ENCODE measurements at regions of chr1 and their contacts with region 1.

Region 1: DNA sequence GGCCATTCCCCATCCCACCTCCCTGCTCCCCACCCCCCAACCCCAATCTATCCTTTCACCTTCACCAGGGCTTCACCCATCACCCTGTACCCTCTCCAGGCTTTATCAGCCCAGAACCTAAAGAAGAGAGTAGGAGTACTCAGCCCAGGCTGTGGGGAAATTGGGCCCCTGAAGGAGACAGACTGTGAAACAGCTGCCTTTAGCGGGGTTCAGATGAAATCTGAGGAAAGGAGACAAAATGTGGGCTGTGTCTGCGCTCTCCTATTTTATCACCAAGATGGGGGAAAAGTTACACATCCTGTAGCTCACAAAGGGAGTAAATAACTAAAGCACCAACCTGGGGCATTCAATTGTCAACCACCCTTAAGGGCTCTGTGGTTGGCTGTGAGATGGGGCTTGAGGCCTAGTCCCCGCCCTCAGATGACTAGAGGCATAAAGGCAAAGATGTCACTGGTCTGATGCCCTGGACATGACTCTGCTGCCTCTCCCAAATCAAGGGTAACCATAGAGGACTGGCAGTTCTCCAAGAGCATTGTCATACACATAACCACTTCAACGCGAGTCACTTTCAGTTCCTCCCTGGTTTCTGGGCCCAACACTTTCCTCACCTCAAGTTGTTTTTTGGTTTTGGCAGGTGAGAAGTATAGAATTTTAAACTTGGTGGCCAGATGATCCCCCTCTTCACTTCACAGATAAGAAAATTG is 30.0 kb downstream of the SLC27A3 start:
- DNase-seq: peak; percentile 90
- H3K4me3 ChIP-seq: peak overlapping the region; percentile 11
- H3K27ac ChIP-seq: peak overlapping the region; percentile 86
- H3K4me1 ChIP-seq: peaks cover 37% of the 10 kb centered on the region
- CTCF ChIP-seq: no peak

Region 2: DNA sequence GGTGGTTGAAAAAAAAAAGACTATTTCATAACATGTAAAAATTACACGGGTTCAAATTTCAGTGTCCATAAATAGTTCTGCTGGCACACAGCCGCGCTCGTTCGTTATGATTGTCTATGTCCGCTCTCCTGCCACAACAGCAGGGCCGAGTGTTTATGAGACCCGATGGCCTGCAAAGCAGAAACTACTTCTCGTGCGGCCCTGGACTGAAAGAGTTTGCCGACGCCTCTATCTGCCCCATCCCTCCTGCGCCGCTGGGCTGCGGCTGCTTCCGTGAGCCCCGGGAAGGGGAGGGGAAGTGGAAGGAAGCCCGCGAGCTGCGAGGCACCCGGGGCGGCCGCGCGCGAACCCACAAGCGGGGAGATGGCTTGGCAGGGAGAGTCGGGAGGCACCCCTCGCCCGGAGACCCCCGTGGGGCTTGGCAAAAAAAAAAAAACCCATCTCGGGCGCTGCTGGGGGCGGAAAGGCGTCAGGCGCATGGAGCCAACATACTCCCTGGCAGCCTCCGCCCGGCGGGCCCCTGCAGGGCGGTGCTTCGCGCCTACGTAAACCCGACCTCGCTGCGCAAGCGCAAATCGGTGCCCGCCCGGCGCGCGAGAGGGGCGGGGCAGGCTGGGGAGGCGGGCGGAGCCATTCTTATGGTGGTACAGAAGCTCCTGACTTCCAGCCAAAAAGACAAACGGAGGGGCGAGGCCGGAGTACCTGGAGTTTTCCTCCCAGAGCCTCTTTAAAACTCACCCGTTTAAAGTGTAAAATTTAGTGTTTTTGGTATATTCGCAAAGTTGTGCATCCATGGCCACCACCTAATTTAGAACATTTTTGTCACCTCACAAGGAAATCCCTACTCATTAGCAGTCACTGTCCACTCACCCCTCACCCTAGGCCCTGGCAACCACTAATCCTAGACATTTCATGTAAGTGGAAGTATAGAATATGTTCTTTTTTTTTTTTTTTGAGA is 21.7 kb before region 1 on chr1:
- CTCF ChIA-PET with region 1: interaction called, 13 read pairs
- POLR2A ChIA-PET with region 1: no interaction called
- intact Hi-C with region 1: no loop called
- DNase-seq: peak; percentile 95
- H3K4me3 ChIP-seq: peak overlapping the region; percentile 70
- H3K27ac ChIP-seq: peak overlapping the region; percentile 62
- H3K4me1 ChIP-seq: peaks cover 17% of the 10 kb centered on the region
- CTCF ChIP-seq: peak; percentile 23; the same call in 1 of the 2 replicates

Measured in OCI-LY7 (cell line).